Panc1 (cell line): ENCODE measurements at regions of chr16 and their contacts with region 1.

Region 1: DNA sequence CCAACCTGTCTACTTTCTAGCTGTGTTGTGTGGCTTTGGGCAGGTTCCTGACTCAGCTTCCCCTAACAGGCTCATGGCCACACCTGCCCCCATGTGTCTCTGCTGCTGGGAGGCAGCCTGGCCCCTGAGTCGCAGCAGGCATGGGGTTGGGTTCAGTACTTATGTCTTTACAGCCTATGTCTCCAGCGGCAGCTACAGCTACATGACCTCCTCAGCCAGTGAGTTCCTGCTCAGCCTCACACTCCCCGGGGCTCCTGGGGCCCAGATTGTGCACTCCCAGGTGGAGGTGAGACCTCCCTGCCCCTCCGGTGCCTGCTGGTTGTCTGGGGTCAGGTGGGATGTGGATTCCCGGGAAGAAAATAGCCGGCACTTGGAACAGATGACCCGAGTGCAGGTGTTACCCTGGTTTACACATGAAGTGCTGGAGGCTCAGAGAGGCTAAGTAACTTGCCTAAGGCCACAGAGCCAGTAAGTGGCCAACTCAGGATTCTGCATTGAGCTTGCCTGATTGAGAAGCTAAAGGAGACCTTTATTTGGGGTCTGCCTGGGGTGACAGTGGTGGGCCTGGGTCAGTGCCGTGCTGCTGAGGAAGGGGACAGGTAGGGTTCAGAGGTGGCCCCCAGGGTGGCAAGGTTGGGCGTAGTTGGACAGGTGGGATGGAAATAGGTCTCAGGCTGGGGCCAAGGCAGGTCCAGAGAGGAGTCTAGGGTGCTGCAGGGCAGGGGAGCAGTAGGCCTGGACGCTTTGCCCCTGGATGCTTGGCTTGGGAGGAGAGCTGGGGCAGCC is 15.9 kb downstream of the FCSK start:
- DNase-seq: no peak
- ATAC-seq: peak; percentile 3; the same call in 1 of the 2 replicates
- H3K4me3 ChIP-seq: no peak overlapping the region
- H3K27ac ChIP-seq: no peak overlapping the region
- H3K4me1 ChIP-seq: no peaks in the 10 kb centered on the region
- H3K27me3 ChIP-seq: no peaks in the 10 kb centered on the region
- CTCF ChIP-seq: no peak

Region 2: GRCh38 chr16:70416748-70417616 is 53.4 kb before region 1 on chr16:
- CTCF ChIA-PET with region 1: no interaction called
- POLR2A ChIA-PET with region 1: interaction called, 12 read pairs
- in situ Hi-C with region 1: no loop called
- intact Hi-C with region 1: no loop called
- DNase-seq: no peak
- ATAC-seq: no peak
- H3K4me3 ChIP-seq: no peak overlapping the region
- H3K27ac ChIP-seq: peak overlapping the region; percentile 65
- H3K4me1 ChIP-seq: peaks cover 56% of the 10 kb centered on the region
- H3K27me3 ChIP-seq: no peaks in the 10 kb centered on the region
- CTCF ChIP-seq: no peak